Left lung (tissue), 14 donors: ENCODE measurements at regions of chr2 and their contacts with region 1.

Region 1: GRCh38 chr2:187574969-187575750 is 20.9 kb upstream of the TFPI start:
- DNase-seq: no peak
- ATAC-seq: peak; percentile 52
- H3K4me3 ChIP-seq: no peak overlapping the region
- H3K27ac ChIP-seq: peak overlapping the region; percentile 62 to 67
- H3K4me1 ChIP-seq: peaks cover 0 to 18% of the 10 kb centered on the region in 2 donors
- H3K27me3 ChIP-seq: no peaks in the 10 kb centered on the region
- CTCF ChIP-seq: no peak

Region 2: GRCh38 chr2:187482796-187483195 is 92.4 kb before region 1 on chr2:
- intact Hi-C with region 1: no loop called
- DNase-seq: no peak
- ATAC-seq: no peak
- H3K4me3 ChIP-seq: no peak overlapping the region
- H3K27ac ChIP-seq: no peak overlapping the region
- H3K4me1 ChIP-seq: no peaks in the 10 kb centered on the region
- H3K27me3 ChIP-seq: no peaks in the 10 kb centered on the region
- CTCF ChIP-seq: no peak

Region 3: GRCh38 chr2:187499941-187500532 is 75.1 kb before region 1 on chr2:
- intact Hi-C with region 1: loop called in 1 of 2 experiments (anchors 5 kb)
- DNase-seq: peak in 2 of 4 donors; percentile 49 to 73
- ATAC-seq: peak; percentile 93
- H3K4me3 ChIP-seq: no peak overlapping the region
- H3K27ac ChIP-seq: no peak overlapping the region
- H3K4me1 ChIP-seq: peaks cover 0 to 29% of the 10 kb centered on the region in 2 donors
- H3K27me3 ChIP-seq: no peaks in the 10 kb centered on the region
- CTCF ChIP-seq: peak; percentile 55 to 82